Spleen (tissue), 13 donors: ENCODE measurements at regions of chr14 and their contacts with region 1.

Region 1: DNA sequence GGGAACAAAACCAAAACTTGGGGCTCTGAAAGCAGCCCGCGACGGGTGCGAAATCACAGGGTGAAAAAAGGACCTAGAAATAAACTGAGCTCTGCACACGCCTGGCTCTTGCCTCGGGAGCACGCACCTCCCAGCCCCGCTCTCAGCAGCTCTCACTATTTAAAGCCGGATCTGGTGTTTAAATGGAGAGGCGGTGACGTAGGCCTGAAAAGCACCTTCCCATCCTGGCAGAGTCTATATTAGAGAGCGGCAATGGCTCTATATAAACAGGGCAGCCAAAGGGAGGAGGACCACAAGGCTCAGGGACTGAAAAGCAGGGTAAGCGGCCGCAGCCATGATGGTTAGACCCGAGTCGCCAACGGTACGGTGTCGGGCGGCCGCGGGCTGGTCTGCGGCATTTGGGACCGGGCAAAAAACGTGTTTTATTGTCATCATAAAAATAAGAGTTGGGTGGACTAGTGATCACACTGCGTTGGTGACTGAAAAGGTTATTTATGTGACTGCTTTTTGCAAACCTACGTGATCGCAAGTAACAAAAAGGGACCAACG is 1.5 kb downstream of the GTF2A1 start:
- DNase-seq: peak; percentile 95
- H3K4me3 ChIP-seq: peak overlapping the region; percentile 44 to 76 (median 62)
- H3K27ac ChIP-seq: peak overlapping the region; percentile 94 to 99 (median 99)
- H3K4me1 ChIP-seq: peaks cover 19 to 59% (median 36%) of the 10 kb centered on the region in 6 donors
- H3K27me3 ChIP-seq: no peaks in the 10 kb centered on the region
- CTCF ChIP-seq: no peak
- POLR2A ChIP-seq: peak; percentile 96 to 100 (median 99)

Region 2: DNA sequence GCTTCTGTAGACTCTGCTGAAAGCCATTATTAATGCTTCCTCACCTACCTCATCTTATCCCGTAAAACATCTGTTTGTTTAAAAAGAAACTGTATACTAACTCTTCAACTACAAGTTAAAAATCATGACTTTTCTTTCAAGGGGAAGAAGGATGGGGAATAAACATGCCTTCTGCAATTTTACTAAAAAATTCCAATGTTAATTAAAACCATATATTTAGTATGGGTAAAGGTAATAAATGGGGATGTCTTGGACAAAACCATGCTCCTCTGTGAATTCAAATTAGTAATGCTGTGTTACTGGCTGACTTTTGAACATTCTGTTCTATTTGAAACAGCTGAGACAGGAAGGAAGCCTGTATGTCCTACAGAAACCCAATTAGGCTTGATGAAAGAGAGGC is 696.9 kb before region 1 on chr14:
- intact Hi-C with region 1: no loop called
- DNase-seq: no peak
- H3K4me3 ChIP-seq: no peak overlapping the region
- H3K27ac ChIP-seq: no peak overlapping the region
- H3K4me1 ChIP-seq: no peaks in the 10 kb centered on the region
- H3K27me3 ChIP-seq: no peaks in the 10 kb centered on the region
- CTCF ChIP-seq: no peak
- POLR2A ChIP-seq: no peak

Region 3: DNA sequence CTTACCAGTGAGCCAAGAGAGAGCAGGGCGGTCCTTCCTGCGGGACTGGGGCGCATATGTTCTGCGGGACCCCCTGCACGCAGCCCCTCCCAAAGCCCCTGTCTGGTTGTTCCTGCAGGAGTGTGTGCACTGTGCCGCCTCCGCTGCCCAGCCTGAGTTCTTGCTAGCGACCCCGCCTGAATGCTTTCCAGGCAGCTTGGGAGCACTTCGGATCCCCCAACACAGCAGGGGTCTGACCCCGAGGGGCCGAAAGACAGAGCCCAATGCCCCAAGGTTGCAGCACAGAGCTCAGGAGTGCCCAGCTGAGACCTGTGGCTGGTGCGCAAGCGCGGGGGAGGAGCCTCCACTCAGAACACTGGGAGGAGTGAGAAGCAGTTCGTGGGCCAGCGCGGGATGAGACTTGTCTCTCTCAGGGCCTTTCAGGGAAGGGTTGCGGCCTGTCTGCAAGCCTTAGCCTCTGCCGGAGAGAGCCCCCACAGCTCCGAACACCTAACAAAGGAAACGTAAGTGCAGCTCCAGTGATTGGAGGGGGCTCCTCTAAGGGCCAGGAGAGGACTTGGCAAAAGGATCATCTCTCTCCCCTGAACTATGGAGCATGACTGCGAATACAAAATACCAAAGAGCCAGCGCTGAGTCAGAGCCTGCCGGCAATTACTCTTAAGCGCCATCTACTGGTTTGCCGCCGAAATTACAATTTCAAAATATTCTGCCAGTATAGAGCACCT is 49.0 kb before region 1 on chr14:
- intact Hi-C with region 1: loop called (anchors 5 kb)
- DNase-seq: peak; percentile 98
- H3K4me3 ChIP-seq: peak overlapping the region; percentile 52 to 85 (median 62)
- H3K27ac ChIP-seq: peak overlapping the region; percentile 90 to 97 (median 94)
- H3K4me1 ChIP-seq: peaks cover 0 to 49% (median 20%) of the 10 kb centered on the region in 6 donors
- H3K27me3 ChIP-seq: no peaks in the 10 kb centered on the region
- CTCF ChIP-seq: peak; percentile 52 to 91 (median 84)
- POLR2A ChIP-seq: peak in 2 of 3 donors; percentile 9 to 79

Region 4: DNA sequence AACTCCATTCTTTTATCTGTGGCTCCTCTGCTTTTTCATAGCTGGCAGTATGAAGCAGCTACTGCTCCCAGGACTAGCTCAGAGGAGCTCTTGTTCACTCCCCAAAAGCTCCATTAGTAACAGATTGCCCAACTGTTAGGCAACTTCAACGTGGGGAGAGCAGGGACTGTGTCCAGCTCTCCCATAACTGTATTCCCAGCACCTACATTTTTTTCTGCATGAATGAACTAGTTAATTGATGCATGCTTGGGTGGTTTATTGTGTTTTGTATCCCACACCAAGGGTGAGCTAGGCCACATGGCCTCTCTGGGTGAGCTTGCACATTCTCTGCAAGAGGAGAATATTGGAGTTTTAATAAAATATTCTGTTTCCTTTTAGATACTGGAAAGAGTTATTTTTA is 165.6 kb after region 1 on chr14:
- intact Hi-C with region 1: no loop called
- DNase-seq: no peak
- H3K4me3 ChIP-seq: no peak overlapping the region
- H3K27ac ChIP-seq: peak overlapping the region in 1 of 8 donors; percentile 72
- H3K4me1 ChIP-seq: peaks cover 0 to 28% (median 13%) of the 10 kb centered on the region in 6 donors
- H3K27me3 ChIP-seq: no peaks in the 10 kb centered on the region
- CTCF ChIP-seq: no peak
- POLR2A ChIP-seq: no peak